ENCODE measurements at regions of chr6 and their contacts with region 1.

Region 1: DNA sequence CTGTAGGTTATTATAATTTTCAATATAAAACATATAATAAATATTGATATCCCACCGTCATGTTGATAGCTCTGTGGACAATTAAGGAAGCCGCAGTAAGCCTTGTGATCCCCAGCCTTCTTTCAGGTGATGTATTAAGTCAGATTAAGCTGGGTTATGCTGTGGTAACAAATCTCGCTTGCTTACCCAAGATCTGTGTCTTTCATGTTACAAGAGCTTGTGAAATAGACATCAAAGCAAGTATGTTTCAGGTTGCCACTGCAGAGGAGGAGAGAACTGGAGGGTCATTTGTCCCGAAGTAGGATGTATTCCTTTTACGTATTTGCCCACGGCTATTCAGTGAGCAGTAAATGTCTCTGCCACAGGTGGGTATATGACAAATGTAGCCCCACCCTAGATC is 17.8 kb upstream of the BCKDHB start:
- DNase-seq: no peak
- H3K4me3 ChIP-seq: no peak overlapping the region
- H3K27ac ChIP-seq: no peak overlapping the region
- H3K4me1 ChIP-seq: no peaks in the 10 kb centered on the region
- CTCF ChIP-seq: no peak

Region 2: DNA sequence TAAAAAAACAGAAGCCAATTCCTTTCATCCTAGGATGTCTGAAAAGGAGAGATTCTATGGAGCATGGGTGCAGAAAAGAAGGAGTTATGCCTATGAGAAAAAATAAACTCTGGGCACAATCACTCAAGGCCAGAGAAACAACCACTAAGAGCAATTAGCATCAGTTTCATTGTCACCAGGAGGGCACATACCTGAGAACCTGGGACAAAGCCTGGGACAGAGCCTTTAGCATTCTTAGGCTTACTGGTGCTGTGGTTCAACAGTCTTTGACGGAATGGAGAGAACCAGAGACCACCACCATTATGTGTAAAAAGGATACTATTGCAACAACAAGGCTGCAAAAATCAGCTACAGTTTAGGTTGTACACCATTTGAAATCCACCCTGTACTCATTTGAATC is 11.6 kb before region 1 on chr6:
- CTCF ChIA-PET with region 1: no interaction called
- POLR2A ChIA-PET with region 1: interaction called, 10 read pairs
- intact Hi-C with region 1: no loop called
- DNase-seq: no peak
- H3K4me3 ChIP-seq: no peak overlapping the region
- H3K27ac ChIP-seq: no peak overlapping the region
- H3K4me1 ChIP-seq: no peaks in the 10 kb centered on the region
- CTCF ChIP-seq: no peak

Measured in OCI-LY7 (cell line).